ENCODE measurements at regions of chr20 and their contacts with region 1.

Region 1: DNA sequence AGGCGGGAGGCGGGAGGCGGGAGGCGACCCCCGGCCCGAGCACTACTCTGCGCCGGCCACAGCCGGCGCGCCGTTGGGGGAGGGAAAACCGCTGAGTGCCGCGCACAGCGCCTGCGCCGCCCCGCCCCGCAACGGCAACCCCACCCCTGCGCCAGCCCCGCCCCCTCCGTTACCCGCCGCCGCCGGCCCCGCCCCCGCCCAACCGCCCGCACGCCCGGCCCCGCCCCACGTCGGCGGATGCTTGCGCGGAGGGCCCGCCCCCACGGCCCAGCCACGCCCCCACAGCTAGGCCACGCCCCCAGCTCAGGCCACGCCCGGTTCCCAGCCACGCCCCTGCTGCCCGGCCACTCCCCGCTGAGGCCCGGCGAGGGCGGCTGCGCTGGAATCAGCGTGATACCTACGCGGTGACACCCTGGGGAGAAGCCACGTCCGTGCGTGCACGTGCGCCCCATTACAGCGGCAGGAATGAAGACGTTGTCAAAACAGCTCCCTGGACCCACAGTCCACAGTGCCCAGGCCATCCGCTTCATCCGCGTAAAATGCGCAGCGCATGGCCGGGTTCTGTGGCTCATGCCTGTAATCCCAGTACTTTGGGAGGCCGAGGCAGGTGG is at the start of gene TCFL5:
- DNase-seq: peak; percentile 90 to 100 (median 93)
- ATAC-seq: peak; percentile 98
- H3K4me3 ChIP-seq: no peak within 1 kb of the TSS
- H3K4me3 Mint-ChIP-seq: peak within 1 kb of the TSS; percentile 69 to 84 (median 76)
- H3K27ac ChIP-seq: peak within 1 kb of the TSS; percentile 48
- H3K27ac Mint-ChIP-seq: peak within 1 kb of the TSS; percentile 26 to 91 (median 74)
- H3K4me1 ChIP-seq: peaks cover 9 to 15% of the 10 kb centered on the region in 2 donors
- H3K4me1 Mint-ChIP-seq: peaks cover 10 to 30% (median 22%) of the 10 kb centered on the region in 7 donors
- H3K27me3 ChIP-seq: no peaks in the 10 kb centered on the region
- H3K27me3 Mint-ChIP-seq: peaks cover 0 to 37% (median 0%) of the 10 kb centered on the region in 5 donors
- total RNA-seq, gene TCFL5: 3.7 to 10.8 (median 7.5) TPM

Region 2: DNA sequence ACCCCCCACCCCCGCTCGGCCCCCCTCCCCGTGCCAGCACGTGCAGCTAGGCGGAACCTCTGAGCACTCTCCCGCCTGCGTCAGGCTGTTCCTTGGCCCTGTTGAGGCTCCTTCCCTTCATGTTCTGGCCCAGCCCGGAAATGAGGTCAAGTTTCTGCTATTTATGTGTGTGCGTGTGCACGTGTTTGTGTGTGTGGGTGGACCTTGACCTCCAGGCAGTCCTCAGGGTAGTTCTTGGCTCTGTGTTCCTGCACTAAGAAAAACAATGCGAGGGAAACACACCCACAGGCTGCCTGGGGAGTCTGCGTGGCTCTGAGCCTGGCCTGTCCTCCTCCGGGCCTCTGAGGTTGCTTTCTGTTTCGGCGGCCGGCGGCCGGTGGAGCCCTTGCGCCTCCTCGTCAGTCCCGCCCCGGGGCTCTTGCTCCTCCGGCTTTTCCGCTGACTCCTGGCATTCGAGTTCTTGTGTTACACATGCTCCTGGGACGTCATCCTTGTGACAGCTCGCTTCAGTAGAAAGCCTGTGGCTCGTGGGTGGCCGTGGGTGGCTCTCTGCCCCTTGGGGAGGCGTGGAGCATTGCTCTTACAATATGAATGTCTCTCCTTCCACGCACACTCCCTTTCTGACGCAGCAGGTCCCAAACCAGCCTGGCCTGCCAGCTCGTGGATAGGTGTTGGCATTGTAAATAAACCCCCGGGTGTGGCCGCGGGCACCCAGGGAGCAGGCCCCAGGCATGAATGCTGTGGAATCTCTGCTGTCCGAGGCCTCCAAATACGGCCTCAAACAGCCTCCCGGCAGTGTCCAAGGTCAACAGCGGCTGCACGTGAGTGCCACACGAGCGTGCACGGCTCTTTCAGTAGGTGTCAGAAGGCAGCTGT is 209.5 kb before region 1 on chr20:
- CTCF ChIA-PET with region 1: no interaction called
- POLR2A ChIA-PET with region 1: no interaction called
- intact Hi-C with region 1: loop called in 1 of 2 experiments (anchors 2 kb)
- DNase-seq: peak; percentile 44 to 80 (median 75)
- ATAC-seq: peak; percentile 78
- H3K4me3 ChIP-seq: peak overlapping the region; percentile 40
- H3K4me3 Mint-ChIP-seq: peak overlapping the region; percentile 80 to 95 (median 84)
- H3K27ac ChIP-seq: peak overlapping the region; percentile 81
- H3K27ac Mint-ChIP-seq: peak overlapping the region; percentile 93 to 99 (median 97)
- H3K4me1 ChIP-seq: peaks cover 17 to 20% of the 10 kb centered on the region in 2 donors
- H3K4me1 Mint-ChIP-seq: peaks cover 11 to 45% (median 30%) of the 10 kb centered on the region in 7 donors
- H3K27me3 ChIP-seq: no peaks in the 10 kb centered on the region
- H3K27me3 Mint-ChIP-seq: no peaks in the 10 kb centered on the region

Region 3: GRCh38 chr20:62822788-62823651 is 38.8 kb before region 1 on chr20:
- CTCF ChIA-PET with region 1: no interaction called
- POLR2A ChIA-PET with region 1: interaction called, 3 read pairs
- intact Hi-C with region 1: loop called in 1 of 2 experiments (anchors 1 kb)
- DNase-seq: no peak
- ATAC-seq: peak; percentile 49
- H3K4me3 ChIP-seq: no peak overlapping the region
- H3K4me3 Mint-ChIP-seq: peak overlapping the region in 3 of 10 donors; percentile 16 to 63 (median 41)
- H3K27ac ChIP-seq: no peak overlapping the region
- H3K27ac Mint-ChIP-seq: peak overlapping the region in 2 of 9 donors; percentile 13 to 22
- H3K4me1 ChIP-seq: peaks cover 3 to 8% of the 10 kb centered on the region in 2 donors
- H3K4me1 Mint-ChIP-seq: peaks cover 0 to 6% (median 2%) of the 10 kb centered on the region in 7 donors
- H3K27me3 ChIP-seq: peaks cover 0 to 8% of the 10 kb centered on the region in 2 donors
- H3K27me3 Mint-ChIP-seq: peaks cover 0 to 11% (median 4%) of the 10 kb centered on the region in 5 donors

Region 4: DNA sequence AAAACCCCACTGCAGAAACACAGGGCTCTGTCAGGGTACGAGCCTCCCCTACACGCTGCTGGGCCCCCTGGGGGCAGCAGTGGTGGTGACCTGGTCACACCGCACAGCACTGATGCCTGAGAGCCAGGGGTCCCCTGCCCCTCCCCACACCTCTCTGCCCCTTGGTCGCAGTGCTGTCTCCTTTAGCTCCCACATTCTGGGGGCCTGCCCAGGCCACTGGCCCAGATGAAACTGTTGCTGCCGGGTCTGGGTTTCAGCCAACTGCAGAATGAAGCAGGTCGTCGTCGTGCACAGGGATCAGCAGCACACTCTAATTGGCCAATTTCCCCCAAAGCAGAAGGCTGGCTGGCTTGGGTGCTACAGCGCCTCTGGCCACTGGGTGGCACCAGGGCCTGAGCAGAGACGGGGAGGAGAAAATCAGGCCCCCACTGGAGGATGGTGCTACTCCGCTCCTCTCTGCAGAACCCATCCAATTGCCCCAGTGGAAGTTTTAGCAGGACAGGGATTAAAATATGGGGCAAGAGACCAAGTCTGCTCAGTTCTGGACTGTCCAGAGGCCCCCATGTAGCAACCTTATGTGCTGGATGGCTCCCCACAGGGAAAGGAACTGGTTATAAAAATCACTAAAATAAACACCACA is 38.3 kb after region 1 on chr20:
- CTCF ChIA-PET with region 1: no interaction called
- POLR2A ChIA-PET with region 1: interaction called, 3 read pairs
- intact Hi-C with region 1: loop called in 1 of 2 experiments (anchors 5 kb)
- DNase-seq: peak; percentile 60 to 82 (median 78)
- ATAC-seq: peak; percentile 97
- H3K4me3 ChIP-seq: no peak overlapping the region
- H3K4me3 Mint-ChIP-seq: peak overlapping the region; percentile 54 to 81 (median 69)
- H3K27ac ChIP-seq: peak overlapping the region; percentile 60
- H3K27ac Mint-ChIP-seq: peak overlapping the region; percentile 75 to 95 (median 90)
- H3K4me1 ChIP-seq: peaks cover 13 to 22% of the 10 kb centered on the region in 2 donors
- H3K4me1 Mint-ChIP-seq: peaks cover 23 to 42% (median 34%) of the 10 kb centered on the region in 7 donors
- H3K27me3 ChIP-seq: no peaks in the 10 kb centered on the region
- H3K27me3 Mint-ChIP-seq: no peaks in the 10 kb centered on the region

Region 5: GRCh38 chr20:62937366-62938104 is 75.7 kb after region 1 on chr20:
- CTCF ChIA-PET with region 1: no interaction called
- POLR2A ChIA-PET with region 1: no interaction called
- intact Hi-C with region 1: loop called in 1 of 2 experiments (anchors 1 kb)
- DNase-seq: peak; percentile 96 to 98 (median 97)
- ATAC-seq: peak; percentile 95
- H3K4me3 ChIP-seq: peak overlapping the region; percentile 94
- H3K4me3 Mint-ChIP-seq: peak overlapping the region in 6 of 10 donors; percentile 94 to 98 (median 96)
- H3K27ac ChIP-seq: peak overlapping the region; percentile 97
- H3K27ac Mint-ChIP-seq: peak overlapping the region; percentile 88 to 98 (median 95)
- H3K4me1 ChIP-seq: peaks cover 34 to 37% of the 10 kb centered on the region in 2 donors
- H3K4me1 Mint-ChIP-seq: peaks cover 26 to 51% (median 40%) of the 10 kb centered on the region in 7 donors
- H3K27me3 ChIP-seq: no peaks in the 10 kb centered on the region
- H3K27me3 Mint-ChIP-seq: no peaks in the 10 kb centered on the region

Region 6: DNA sequence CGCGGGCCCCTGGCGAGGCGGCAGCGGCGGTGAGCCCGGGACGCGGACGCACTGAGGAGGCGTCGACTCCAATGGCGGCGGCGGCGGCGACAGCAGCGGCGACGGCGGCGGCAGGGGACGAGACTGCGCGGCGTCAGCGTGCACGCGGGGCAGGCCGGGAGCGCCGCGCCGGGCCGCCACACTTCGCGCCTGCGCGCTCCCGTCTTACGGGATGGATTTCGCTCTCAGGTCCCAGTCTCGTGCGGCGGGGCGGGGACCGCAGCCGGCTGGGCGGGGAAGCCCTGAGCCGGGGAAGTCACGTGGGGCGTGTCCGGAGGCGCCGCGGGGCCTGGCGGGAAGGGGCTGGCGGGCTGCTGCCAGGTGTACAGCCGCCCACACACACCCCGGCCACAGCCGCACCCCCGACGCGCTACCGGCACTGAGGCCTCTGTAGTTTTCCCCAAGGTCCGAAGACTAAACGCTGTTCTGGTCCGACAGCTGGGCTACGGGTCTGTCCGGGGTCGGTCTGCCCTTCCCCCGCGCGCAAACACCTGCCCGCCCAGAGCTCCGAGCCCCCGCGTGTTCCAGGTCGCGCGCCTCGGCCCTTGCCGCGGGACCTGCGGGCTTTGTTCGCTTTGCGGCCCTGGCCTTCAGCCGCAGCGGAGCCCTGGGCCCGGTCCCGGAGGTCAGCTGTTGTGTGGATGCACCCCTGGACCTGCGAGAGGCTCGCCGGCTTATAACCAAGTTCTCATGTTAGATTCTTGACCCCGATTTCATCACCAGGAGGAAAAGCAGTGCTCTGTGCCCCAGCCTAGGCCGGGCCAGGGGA is 354.4 kb after region 1 on chr20 and contains the start of gene YTHDF1:
- CTCF ChIA-PET with region 1: no interaction called
- POLR2A ChIA-PET with region 1: no interaction called
- intact Hi-C with region 1: loop called in 1 of 2 experiments (anchors 5 kb)
- DNase-seq: peak; percentile 93 to 98 (median 96)
- ATAC-seq: peak; percentile 97
- H3K4me3 ChIP-seq: peak within 1 kb of the TSS; percentile 78
- H3K4me3 Mint-ChIP-seq: peak within 1 kb of the TSS; percentile 88 to 97 (median 92)
- H3K27ac ChIP-seq: peak within 1 kb of the TSS; percentile 95
- H3K27ac Mint-ChIP-seq: peak within 1 kb of the TSS; percentile 86 to 96 (median 91)
- H3K4me1 ChIP-seq: peaks cover 10 to 39% of the 10 kb centered on the region in 2 donors
- H3K4me1 Mint-ChIP-seq: peaks cover 34 to 49% (median 46%) of the 10 kb centered on the region in 7 donors
- H3K27me3 ChIP-seq: no peaks in the 10 kb centered on the region
- H3K27me3 Mint-ChIP-seq: peaks cover 0 to 6% (median 0%) of the 10 kb centered on the region in 5 donors
- total RNA-seq, gene YTHDF1: 35.9 to 52.1 (median 42.0) TPM